ENCODE measurements at regions of chr1 and their contacts with region 1.

Region 1: DNA sequence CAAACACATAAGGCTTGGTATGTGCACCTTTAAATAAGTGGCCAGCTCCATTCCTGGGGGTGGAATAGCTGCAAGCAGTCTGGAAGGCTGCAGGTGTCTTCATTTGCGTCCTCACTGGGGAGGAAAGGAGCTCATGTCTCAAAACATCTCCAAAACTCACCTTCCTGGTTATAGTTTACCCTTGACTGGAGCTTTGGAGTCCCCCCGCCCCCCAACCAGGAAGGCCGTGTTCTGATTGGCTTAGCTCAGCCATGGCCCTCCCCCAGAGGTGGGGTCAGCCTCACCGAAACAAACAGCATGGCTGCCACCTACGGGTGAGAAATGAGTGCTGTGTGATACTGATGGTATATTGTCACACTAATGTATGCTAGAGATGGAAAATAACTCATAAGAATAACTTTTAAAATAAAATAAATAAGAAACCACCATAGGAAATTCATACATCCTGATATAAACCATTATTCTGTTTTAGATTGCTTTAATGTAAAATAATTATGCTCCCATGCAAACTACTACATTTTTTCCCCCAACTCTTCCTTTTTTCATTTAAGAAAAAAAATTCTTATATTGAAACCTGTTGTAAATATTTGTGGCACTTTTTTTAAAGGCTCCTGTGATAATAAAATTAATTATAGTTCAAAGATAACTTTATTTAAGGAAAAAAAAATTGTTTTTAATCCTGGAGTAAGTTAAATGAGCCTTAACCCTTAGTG is 90.8 kb downstream of the ZP4 start:
- DNase-seq: peak in 9 of 10 donors; percentile 5 to 62 (median 54)
- H3K4me3 ChIP-seq: no peak overlapping the region
- H3K27ac ChIP-seq: no peak overlapping the region
- H3K27me3 ChIP-seq: peaks cover 0 to 2% (median 0%) of the 10 kb centered on the region in 45 donors
- CTCF ChIP-seq: peak in 38 of 56 donors; percentile 5 to 56 (median 36)

Region 2: DNA sequence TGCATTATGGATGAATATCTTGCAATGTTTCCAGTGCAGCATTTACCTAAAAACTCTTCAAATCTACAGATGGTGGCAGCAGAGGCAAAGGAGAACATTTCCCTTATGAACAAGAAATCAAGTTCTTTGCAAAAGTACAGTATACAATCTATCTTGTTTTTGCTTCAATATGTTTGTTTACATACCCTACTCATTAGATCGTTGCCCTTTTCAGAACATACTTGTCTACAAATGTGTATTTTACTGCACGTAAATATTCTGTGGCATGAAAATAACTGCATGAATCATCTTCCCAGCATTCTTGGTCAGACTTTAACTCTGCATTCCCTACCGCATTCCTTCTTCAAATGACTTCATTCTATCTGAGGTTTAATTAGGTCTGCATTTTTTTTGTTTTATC is 121.9 kb before region 1 on chr1:
- intact Hi-C with region 1: loop called in 1 of 2 experiments (anchors 10 kb)
- DNase-seq: no peak
- H3K4me3 ChIP-seq: no peak overlapping the region
- H3K27ac ChIP-seq: no peak overlapping the region
- H3K27me3 ChIP-seq: no peaks in the 10 kb centered on the region
- CTCF ChIP-seq: peak in 37 of 56 donors; percentile 15 to 61 (median 37)